ENCODE measurements at regions of chr6 and their contacts with region 1.

Region 1: GRCh38 chr6:5174244-5174643 is 86.5 kb downstream of the LYRM4 start:
- DNase-seq: peak; percentile 84
- H3K4me3 Mint-ChIP-seq: peak overlapping the region; percentile 48
- H3K27ac Mint-ChIP-seq: peak overlapping the region; percentile 77
- H3K4me1 Mint-ChIP-seq: peaks cover 51% of the 10 kb centered on the region
- H3K27me3 Mint-ChIP-seq: no peaks in the 10 kb centered on the region

Region 2: DNA sequence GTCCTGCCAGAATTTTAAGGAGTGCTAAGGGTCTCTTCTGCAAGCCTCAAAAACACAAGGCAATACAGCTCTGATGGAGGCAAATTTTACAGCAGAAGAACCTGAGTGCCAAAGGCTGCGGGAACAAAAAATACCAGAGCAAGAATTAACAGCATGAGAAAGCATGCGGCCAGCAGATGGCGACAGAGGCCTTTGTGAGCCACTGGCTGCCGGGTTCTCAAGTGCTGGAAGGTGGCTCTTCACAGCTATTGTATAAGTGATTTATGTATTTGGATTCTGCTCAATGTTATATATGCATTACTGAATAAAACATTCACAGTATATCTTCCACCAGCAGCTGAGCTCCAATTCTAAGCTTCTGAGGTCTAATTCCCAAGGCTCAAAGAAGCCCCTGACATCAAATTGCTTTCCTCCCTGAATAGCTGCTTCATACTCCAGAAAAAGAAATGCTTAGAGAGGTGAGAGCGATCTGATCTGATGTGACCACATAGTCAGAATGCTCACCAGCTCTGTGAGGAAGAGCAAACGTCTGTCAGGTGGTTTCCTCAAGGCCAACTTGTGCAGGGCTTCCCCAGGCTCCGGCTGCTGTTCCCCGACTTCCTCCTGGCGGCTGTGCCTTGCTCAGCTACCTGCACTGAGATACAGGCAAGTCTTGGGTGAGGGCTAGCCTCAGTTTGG is 30.5 kb before region 1 on chr6:
- CTCF ChIA-PET with region 1: interaction called, 16 read pairs
- intact Hi-C with region 1: no loop called
- DNase-seq: peak; percentile 92
- H3K4me3 Mint-ChIP-seq: no peak overlapping the region
- H3K27ac Mint-ChIP-seq: no peak overlapping the region
- H3K4me1 Mint-ChIP-seq: no peaks in the 10 kb centered on the region
- H3K27me3 Mint-ChIP-seq: no peaks in the 10 kb centered on the region

Region 3: GRCh38 chr6:5260661-5261544 is 86.7 kb after region 1 on chr6 and contains the starts of genes FARS2 and LYRM4:
- CTCF ChIA-PET with region 1: no interaction called
- intact Hi-C with region 1: loop called (anchors 1 kb)
- DNase-seq: peak; percentile 89
- H3K4me3 Mint-ChIP-seq: peak within 1 kb of the TSS; percentile 95
- H3K27ac Mint-ChIP-seq: peak within 1 kb of the TSS; percentile 99
- H3K4me1 Mint-ChIP-seq: peaks cover 28% of the 10 kb centered on the region
- H3K27me3 Mint-ChIP-seq: no peaks in the 10 kb centered on the region
- total RNA-seq, gene FARS2: 15.4 to 15.8 TPM
- total RNA-seq, gene LYRM4: 46.2 to 51.6 TPM

Region 4: DNA sequence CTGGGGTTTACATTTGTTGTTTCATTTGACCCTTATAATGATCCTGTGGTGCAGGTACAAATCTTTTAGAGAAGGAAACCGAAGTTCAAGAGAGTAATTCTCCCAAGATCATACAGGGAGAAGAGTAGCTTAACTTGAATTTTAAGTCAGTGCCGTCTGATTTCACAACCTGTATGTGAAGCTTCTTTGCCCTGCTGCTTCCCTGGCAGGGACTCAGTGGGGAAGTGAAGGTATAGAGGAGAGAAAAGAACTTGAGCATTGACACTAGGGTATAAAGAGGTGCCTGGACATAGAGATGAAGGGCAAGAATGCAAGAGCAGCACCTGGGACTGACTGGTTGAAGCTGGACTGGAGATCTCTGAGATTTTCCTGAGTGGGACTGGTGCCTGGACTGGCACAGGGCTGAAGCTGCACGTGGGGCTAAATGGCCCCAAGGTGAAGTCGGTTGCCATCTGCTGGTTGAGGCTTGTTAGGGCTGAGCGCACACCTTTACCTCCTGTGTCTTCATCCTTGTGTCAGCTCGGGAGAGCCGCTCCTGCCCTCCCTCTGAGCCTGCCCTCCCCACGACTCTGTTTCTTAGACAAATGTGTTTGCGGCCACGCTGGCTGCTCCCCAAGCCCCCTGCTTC is 128.9 kb after region 1 on chr6:
- CTCF ChIA-PET with region 1: no interaction called
- intact Hi-C with region 1: loop called (anchors 1 kb)
- DNase-seq: peak; percentile 73
- H3K4me3 Mint-ChIP-seq: no peak overlapping the region
- H3K27ac Mint-ChIP-seq: peak overlapping the region; percentile 59
- H3K4me1 Mint-ChIP-seq: peaks cover 36% of the 10 kb centered on the region
- H3K27me3 Mint-ChIP-seq: no peaks in the 10 kb centered on the region

Region 5: DNA sequence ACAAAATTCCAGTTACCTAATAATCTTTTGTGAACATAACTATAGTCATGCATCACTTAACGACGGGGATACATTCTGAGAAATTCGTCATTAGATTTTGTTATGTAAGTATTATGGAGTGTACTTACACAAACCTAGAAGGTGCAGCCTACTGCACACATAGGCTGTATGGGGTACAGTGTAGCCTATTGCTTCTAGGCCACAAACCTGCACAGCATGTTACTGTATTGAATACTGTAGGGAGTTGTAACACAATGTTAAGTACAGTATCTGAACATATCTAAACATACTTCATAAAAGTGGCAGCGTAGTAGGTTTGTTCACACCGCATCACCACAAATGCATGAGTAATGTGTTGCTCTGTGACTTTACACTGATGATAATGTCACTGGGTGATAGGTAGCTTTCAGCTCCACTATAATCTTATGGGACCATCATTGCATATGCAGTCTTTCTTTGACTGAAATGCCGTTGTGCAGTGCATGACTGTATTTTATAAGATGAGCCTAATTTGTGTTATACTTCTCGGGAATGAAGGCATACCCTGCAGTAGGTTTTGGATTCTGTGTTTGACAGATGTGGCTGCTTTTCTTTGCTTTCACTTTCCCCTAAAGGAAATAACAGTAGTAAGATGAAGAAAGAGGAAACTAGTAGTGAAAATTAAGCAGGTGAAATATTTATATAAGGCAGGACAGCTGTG is 452.6 kb after region 1 on chr6:
- CTCF ChIA-PET with region 1: no interaction called
- intact Hi-C with region 1: loop called (anchors 1 kb)
- DNase-seq: peak; percentile 54
- H3K4me3 Mint-ChIP-seq: peak overlapping the region; percentile 2
- H3K27ac Mint-ChIP-seq: no peak overlapping the region
- H3K4me1 Mint-ChIP-seq: peaks cover 50% of the 10 kb centered on the region
- H3K27me3 Mint-ChIP-seq: no peaks in the 10 kb centered on the region

Measured in activated naive CD4-positive, alpha-beta T cell treated with anti-CD3 and anti-CD28 coated beads for 36 hours (primary cell).